CD8-positive, alpha-beta T cell (primary cell): ENCODE measurements at regions of chr12 and their contacts with region 1.

Region 1: GRCh38 chr12:57069523-57069922 is 9.1 kb downstream of the NEMP1 start:
- DNase-seq: peak in 8 of 9 experiments; percentile 28 to 88 (median 61)
- ATAC-seq: peak; percentile 99
- H3K4me3 ChIP-seq: no peak overlapping the region
- H3K4me3 Mint-ChIP-seq: peak overlapping the region; percentile 16
- H3K27ac ChIP-seq: peak overlapping the region in 1 of 2 experiments; percentile 28
- H3K27ac Mint-ChIP-seq: peak overlapping the region; percentile 70
- H3K4me1 ChIP-seq: peaks cover 18% of the 10 kb centered on the region
- H3K4me1 Mint-ChIP-seq: peaks cover 23% of the 10 kb centered on the region
- H3K27me3 ChIP-seq: no peaks in the 10 kb centered on the region
- H3K27me3 Mint-ChIP-seq: no peaks in the 10 kb centered on the region
- CTCF ChIP-seq: peak; percentile 86

Region 2: GRCh38 chr12:57088459-57089248 is 19.1 kb after region 1 on chr12 and contains the start of gene NAB2:
- CTCF ChIA-PET with region 1: interaction called, 76 read pairs
- POLR2A ChIA-PET with region 1: interaction called, 14 read pairs
- intact Hi-C with region 1: loop called (anchors 1 kb)
- DNase-seq: peak; percentile 87 to 97 (median 95)
- ATAC-seq: peak; percentile 60
- H3K4me3 ChIP-seq: peak within 1 kb of the TSS; percentile 87 to 95
- H3K4me3 Mint-ChIP-seq: peak within 1 kb of the TSS; percentile 92
- H3K27ac ChIP-seq: peak within 1 kb of the TSS; percentile 97 to 100
- H3K27ac Mint-ChIP-seq: peak within 1 kb of the TSS; percentile 95
- H3K4me1 ChIP-seq: peaks cover 47% of the 10 kb centered on the region
- H3K4me1 Mint-ChIP-seq: peaks cover 64% of the 10 kb centered on the region
- H3K27me3 ChIP-seq: no peaks in the 10 kb centered on the region
- H3K27me3 Mint-ChIP-seq: no peaks in the 10 kb centered on the region
- CTCF ChIP-seq: no peak
- total RNA-seq, gene NAB2: 5.9 to 6.7 TPM

Region 3: DNA sequence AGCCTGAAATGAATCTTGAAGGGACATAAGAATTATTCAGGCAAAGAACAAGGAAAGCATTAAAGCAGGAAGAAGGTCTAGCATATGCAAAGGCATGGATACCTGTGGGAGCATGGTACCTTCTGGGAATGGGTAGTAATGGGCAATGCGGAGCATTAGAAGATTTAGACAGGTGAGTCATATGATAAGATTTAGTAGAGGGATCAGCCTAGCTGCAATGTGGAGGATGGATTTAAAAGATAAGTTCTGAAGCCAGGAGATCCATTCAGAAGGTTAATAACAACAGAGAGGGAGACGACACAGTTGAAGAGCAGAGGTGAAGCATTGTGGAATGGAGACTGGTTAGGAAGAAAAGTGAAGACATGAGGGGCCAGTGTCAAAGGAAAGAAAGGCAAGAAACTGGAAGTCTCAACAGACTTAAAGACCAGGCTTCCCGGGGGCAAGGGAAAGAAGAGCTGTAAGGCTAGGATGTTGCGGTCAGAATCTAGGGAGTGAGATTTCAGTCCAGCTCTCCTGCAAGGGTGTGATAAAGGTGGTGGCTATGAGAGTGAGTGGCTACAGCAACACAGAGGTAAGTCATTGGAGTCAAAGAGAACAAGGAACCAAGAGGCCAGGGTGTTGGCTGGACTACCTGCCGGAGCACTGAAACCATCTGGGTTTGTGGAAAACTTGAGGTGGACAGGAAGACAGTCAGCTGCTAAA is 47.2 kb after region 1 on chr12:
- CTCF ChIA-PET with region 1: interaction called, 547 read pairs
- POLR2A ChIA-PET with region 1: interaction called, 105 read pairs
- intact Hi-C with region 1: loop called (anchors 1 kb)
- DNase-seq: no peak
- ATAC-seq: no peak
- H3K4me3 ChIP-seq: no peak overlapping the region
- H3K4me3 Mint-ChIP-seq: no peak overlapping the region
- H3K27ac ChIP-seq: no peak overlapping the region
- H3K27ac Mint-ChIP-seq: no peak overlapping the region
- H3K4me1 ChIP-seq: peaks cover 7% of the 10 kb centered on the region
- H3K4me1 Mint-ChIP-seq: peaks cover 12% of the 10 kb centered on the region
- H3K27me3 ChIP-seq: no peaks in the 10 kb centered on the region
- H3K27me3 Mint-ChIP-seq: no peaks in the 10 kb centered on the region
- CTCF ChIP-seq: no peak

Region 4: DNA sequence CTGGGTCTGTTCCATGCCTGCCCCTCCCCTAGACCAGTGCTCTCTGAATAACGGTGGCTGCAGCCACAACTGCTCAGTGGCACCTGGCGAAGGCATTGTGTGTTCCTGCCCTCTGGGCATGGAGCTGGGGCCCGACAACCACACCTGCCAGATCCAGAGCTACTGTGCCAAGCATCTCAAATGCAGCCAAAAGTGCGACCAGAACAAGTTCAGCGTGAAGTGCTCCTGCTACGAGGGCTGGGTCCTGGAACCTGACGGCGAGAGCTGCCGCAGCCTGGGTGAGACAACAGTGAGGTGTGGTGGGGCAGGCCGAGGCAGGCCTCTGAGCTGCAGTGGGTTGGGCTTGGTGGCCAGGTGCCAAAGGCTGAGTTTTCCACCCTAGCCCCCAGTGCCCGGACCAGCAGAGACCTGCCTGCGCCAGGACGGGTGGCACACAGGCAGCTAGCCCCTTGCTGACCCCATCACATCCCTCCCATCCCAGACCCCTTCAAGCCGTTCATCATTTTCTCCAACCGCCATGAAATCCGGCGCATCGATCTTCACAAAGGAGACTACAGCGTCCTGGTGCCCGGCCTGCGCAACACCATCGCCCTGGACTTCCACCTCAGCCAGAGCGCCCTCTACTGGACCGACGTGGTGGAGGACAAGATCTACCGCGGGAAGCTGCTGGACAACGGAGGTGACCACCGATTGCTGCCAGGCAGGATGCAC is 106.1 kb after region 1 on chr12:
- CTCF ChIA-PET with region 1: interaction called, 15 read pairs
- POLR2A ChIA-PET with region 1: no interaction called
- intact Hi-C with region 1: loop called in 1 of 2 experiments (anchors 1 kb)
- DNase-seq: peak in 8 of 9 experiments; percentile 5 to 52 (median 40)
- ATAC-seq: no peak
- H3K4me3 ChIP-seq: no peak overlapping the region
- H3K4me3 Mint-ChIP-seq: no peak overlapping the region
- H3K27ac ChIP-seq: no peak overlapping the region
- H3K27ac Mint-ChIP-seq: no peak overlapping the region
- H3K4me1 ChIP-seq: no peaks in the 10 kb centered on the region
- H3K4me1 Mint-ChIP-seq: no peaks in the 10 kb centered on the region
- H3K27me3 ChIP-seq: no peaks in the 10 kb centered on the region
- H3K27me3 Mint-ChIP-seq: no peaks in the 10 kb centered on the region
- CTCF ChIP-seq: peak; percentile 15

Region 5: DNA sequence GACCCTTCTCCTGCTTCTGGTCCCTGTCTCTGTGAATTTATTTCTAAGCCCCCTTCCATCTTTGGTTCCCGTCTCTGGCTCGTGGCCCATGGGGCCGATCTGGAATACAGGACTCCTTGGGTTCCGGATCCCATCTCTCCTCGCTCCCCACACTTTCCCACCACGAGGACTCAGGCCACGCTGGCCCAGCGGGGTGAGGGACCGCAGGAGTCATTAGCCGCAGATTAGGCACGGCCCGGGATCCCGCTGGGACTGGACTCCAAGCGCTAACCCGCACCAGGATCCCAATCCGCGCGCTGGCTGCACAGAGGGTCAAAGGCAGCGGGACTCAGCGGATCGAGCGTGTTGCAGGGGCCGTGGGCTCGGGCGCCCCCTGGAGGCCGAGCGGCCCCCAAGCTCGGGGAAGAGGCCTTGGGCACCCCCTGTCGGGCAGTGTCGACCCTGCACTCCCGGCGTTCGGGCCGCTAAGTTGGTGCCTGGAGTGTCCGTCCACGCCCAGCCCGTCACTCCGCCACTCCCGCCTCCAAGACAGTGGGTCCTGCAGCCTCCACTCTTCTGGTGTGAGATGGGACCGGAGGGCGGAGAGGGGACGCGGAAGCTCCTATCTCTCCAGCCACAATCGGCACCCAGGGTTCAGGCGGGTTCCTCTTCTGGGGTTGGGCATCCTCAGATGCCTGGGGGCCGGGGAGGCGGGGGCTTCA is 169.5 kb after region 1 on chr12:
- CTCF ChIA-PET with region 1: interaction called, 4 read pairs
- POLR2A ChIA-PET with region 1: no interaction called
- intact Hi-C with region 1: loop called (anchors 1 to 10 kb)
- DNase-seq: peak; percentile 73 to 92 (median 86)
- ATAC-seq: peak; percentile 65
- H3K4me3 ChIP-seq: peak overlapping the region; percentile 64 to 78
- H3K4me3 Mint-ChIP-seq: peak overlapping the region; percentile 93
- H3K27ac ChIP-seq: no peak overlapping the region
- H3K27ac Mint-ChIP-seq: no peak overlapping the region
- H3K4me1 ChIP-seq: peaks cover 79% of the 10 kb centered on the region
- H3K4me1 Mint-ChIP-seq: peaks cover 64% of the 10 kb centered on the region
- H3K27me3 ChIP-seq: peaks cover 48 to 72% of the 10 kb centered on the region in 2 experiments
- H3K27me3 Mint-ChIP-seq: peaks cover 56% of the 10 kb centered on the region
- CTCF ChIP-seq: peak; percentile 100